ENCODE measurements at regions of chr1 and their contacts with region 1.

Region 1: GRCh38 chr1:30889511-30889910 is 19.0 kb downstream of the SDC3 start:
- DNase-seq: no peak

Region 2: DNA sequence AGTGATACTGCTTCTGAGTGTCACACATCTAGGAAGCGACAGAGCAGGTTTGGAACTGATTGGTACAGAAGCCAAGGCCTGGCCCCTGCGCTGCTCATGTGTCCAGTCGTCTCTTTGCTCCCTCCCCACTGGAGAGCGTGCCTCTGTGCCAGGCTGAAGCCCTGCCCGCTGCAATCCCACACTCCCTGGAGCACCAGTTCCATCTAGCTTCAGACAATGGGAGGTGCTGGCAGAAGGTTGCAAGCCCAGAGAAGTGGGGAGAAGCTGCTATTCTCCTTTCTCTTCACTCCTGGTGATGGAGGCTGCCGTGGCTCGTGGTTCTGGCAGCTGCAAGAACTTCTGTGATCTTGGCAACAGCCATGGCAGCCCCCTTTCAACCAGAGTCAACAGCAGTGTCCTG is 417.0 kb before region 1 on chr1:
- intact Hi-C with region 1: no loop called
- DNase-seq: peak; percentile 58

Region 3: DNA sequence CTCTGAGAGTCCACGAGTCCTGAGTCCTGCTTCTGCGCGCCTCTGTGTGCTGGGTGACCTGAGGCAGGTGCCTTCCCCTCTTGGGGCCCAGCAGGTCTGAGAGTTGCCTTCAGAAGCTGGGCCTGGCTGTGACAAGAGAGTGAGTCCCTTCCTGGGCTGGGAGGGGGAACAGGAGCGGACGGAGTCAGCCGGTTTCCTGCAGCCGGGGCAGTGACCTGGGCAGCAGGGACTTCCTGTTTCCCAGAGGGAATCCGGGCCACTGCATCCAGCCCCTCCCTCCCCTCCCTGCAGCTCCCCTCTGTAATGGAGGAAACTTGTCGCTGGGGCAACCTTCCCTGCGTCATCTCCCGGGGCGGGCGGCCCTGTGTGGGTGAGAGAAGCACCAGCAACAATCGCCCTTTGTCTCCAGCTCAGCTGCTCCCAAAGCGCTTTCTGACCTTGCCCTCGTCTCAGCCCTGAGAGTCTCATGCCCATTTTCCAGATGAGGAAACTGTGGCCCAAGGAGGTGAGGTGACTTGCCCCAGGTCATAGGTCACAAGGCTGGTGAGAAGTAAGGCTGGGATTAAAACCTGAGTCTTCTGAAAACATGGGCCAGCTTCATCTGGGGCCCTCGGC is 42.0 kb before region 1 on chr1:
- intact Hi-C with region 1: loop called in 1 of 2 experiments (anchors 1 kb)
- DNase-seq: peak; percentile 92